ENCODE measurements at regions of chr11 and their contacts with region 1.

Region 1: DNA sequence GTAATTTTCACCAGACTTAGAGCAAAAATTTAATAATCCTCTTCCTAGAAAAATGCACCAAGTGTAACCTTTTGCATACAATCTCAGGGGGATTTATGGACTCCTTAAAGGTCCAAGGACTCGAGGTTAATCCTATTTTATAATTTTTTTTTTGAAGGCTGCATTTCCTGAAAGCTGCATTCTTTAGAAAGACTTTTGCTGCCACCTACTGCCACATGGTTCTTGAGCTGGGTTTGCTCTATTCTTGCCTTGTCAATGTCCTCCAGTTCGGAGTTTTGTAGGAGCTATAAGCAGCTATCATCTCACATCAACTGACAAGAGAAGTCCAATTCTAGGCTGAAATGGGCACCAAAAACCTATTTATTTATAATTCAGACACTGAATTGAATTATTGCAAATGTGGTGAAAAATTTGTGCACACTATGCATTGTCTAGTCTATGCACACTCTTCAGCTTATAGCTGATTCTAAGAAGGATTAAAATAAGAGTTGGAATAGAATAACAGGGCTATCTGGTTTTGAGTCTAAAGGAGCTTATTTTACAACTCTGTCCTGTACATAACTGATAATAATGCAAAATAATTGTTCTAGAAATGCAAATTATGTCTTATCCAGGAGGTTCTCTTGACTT is 31.3 kb downstream of the TRAF6 start:
- DNase-seq: no peak
- H3K4me3 ChIP-seq: no peak overlapping the region
- CTCF ChIP-seq: peak; percentile 53

Region 2: GRCh38 chr11:36265793-36266628 is 212.8 kb before region 1 on chr11:
- CTCF ChIA-PET with region 1: interaction called, 34 read pairs
- POLR2A ChIA-PET with region 1: no interaction called
- DNase-seq: no peak
- H3K4me3 ChIP-seq: no peak overlapping the region
- CTCF ChIP-seq: peak; percentile 87

Region 3: DNA sequence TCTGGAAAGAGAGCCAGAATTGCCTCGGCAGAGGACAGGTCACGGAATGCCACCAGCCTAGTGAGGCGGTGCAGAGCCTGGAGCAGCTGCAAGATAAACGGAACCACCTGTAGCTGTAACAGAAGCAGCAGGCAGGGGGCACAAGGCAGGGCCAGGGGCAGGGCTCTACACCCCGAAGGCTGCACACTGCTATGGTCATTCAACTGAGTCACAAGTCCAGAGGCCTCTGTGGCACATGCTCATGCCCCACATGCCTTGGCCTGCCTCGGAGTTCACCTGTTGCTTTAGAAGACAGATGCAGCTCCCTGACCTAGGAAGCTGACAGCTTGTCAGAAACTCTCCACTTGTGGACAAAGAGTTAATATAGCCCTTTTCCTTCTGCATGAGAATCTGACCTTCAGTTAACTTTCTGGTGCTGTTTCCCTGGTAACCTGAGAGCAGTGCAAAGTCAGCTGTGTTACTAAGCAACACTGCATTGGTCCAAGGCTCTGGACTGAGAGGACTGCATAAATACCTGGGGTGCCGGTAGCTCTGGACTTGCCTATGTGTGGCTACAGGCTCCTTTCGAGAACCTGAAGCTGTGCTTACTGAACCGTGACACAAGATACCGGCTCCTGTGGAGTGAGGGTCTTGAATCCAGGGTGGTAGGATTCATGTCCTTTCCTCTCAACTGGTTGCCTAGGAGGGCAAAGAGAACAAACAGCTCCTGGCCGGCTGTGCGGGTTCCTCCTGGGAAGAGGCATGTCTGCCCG is 200.1 kb before region 1 on chr11:
- CTCF ChIA-PET with region 1: interaction called, 33 read pairs
- POLR2A ChIA-PET with region 1: no interaction called
- DNase-seq: no peak
- H3K4me3 ChIP-seq: no peak overlapping the region
- CTCF ChIP-seq: no peak

Region 4: GRCh38 chr11:36306888-36307287 is 171.9 kb before region 1 on chr11:
- CTCF ChIA-PET with region 1: interaction called, 565 read pairs
- POLR2A ChIA-PET with region 1: no interaction called
- DNase-seq: no peak
- H3K4me3 ChIP-seq: no peak overlapping the region
- CTCF ChIP-seq: peak; percentile 47

Region 5: DNA sequence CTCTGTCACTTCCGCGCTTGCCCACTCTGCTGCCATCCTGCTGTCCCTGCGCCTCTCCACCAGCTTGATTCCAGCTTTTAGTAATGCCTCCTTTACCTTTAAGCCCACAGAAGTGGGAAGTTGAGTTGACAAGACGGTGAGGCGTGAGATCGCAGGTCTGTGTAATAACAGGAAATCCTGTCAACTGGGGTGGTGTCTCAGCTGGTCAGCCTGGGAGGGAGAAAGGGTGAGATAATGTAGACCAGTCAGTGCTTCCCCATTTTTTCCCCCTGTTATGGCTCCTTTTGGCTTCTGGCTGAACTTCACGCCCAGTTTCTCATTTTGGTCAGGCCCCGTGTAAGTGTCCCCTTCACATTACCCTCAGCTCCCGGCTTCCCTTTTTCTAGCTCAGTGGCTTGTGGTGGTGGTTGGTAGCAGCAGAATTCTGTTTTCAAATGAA is 67.6 kb before region 1 on chr11:
- CTCF ChIA-PET with region 1: interaction called, 14 read pairs
- POLR2A ChIA-PET with region 1: no interaction called
- DNase-seq: no peak
- H3K4me3 ChIP-seq: no peak overlapping the region
- CTCF ChIP-seq: no peak

Region 6: GRCh38 chr11:36463781-36464180 is 15.0 kb before region 1 on chr11:
- CTCF ChIA-PET with region 1: interaction called, 62 read pairs
- POLR2A ChIA-PET with region 1: no interaction called
- DNase-seq: no peak
- H3K4me3 ChIP-seq: no peak overlapping the region
- CTCF ChIP-seq: no peak

Region 7: DNA sequence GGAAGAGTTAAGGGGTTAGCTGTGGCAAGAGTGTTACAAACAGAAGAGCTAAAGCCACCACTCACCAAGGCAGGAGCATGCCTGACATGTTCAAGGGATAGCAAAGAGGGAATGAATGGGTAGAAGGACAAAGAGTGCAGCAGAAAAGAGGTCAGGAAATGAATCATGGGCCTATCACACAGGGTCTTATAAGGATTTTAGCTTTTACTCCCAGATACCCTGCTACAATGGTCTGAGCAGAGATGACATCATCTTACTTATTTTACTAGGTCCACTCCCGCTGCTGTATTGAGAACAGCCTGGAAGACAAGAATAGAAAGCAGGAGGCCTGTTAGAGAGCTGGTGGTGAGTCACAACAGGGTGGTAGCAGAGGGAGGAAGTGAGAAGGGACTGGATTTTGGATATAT is 21.5 kb after region 1 on chr11:
- CTCF ChIA-PET with region 1: interaction called, 72 read pairs
- POLR2A ChIA-PET with region 1: interaction called, 3 read pairs
- DNase-seq: peak; percentile 63
- H3K4me3 ChIP-seq: no peak overlapping the region
- CTCF ChIP-seq: no peak

Measured in AG04449 (cell line).